ENCODE measurements at regions of chr12 and their contacts with region 1.

Region 1: DNA sequence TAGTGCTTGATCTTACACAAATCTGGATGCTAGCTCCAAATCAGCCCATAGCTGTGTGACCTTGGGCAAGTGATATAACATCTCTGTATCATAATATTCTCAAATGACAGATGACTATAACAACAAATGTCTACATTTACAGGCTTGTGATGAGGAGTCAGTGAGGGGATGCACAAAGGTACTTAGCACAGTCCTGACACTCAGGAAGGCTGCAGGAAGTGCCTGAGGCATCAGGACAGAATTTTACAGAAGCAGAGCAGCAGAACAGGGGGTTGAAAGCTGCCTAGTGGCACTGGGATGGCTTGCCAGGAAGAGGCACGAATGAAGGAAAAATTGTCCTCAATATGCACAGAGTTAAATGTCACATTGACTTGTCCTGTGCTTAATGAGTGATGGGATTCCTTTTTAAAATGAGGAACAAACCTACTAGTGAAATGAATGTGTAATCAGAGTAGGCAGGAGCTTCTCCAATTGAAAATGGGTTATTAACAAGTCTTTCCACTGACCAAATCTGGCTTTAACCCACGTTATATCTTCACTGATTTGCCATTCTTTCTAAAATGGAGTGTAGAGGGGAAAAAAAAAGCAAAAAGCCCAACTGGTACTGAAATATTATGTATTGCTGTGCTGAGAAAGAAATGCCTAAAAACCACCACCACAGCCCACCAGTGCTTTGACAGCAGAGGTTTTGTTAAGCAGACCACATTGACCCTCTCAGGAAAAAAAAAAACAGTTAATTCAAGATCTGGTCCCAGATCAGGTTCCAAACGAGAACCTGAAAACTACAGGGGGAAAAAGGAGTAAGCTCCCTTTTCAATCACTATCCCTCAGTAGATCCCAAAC is 11.6 kb downstream of the BTG1 start:
- DNase-seq: no peak
- ATAC-seq: no peak
- H3K4me3 ChIP-seq: no peak overlapping the region
- H3K27ac ChIP-seq: peak overlapping the region in 3 of 4 donors; percentile 2 to 37 (median 3)
- H3K4me1 ChIP-seq: peaks cover 66 to 74% of the 10 kb centered on the region in 2 donors
- H3K27me3 ChIP-seq: no peaks in the 10 kb centered on the region
- CTCF ChIP-seq: no peak
- POLR2A ChIP-seq: no peak

Region 2: DNA sequence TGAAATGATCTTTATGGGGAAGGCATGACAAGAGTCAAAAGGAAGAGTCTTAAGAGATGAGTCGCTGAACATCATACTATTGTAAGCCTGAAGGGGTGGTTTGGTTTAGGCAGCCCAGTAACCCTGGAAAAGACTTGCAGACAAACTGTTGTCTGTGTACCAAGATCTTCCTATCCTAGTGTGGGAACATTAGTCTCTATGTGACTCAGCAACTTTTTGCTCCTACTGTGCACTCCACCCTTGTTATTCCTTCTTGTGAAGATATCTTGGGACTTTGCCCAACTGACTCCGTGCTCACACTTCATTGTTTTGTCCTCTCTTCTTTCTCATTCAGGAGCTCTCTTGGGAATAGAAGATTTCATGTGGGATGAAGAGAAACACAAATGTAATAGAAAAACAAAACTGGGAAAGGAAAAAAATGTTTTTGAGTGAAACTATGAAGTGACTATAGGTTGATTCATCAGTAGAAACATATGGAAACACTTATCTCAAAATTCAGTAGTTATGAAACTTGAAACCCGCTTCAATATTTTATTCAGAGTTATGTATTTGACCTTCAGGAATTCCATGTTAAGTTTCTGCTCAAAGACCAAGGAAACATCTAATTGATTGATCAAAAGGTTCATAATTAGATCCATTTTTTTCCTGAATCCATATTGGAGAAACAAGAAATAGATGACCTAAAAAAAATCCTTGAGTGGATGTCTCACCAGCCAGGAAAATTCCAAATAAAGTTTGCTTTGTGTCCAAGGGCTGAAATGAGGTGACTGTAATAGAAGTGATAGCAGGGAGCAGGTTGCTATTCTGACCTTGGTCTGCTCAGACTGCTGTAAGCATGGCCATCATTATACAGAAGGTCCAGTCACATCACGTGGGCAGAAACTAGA is 55.6 kb before region 1 on chr12:
- in situ Hi-C with region 1: no loop called
- intact Hi-C with region 1: loop called (anchors 5 kb)
- DNase-seq: peak in 1 of 2 donors; percentile 50
- ATAC-seq: peak; percentile 72 to 80
- H3K4me3 ChIP-seq: no peak overlapping the region
- H3K27ac ChIP-seq: peak overlapping the region in 3 of 4 donors; percentile 4 to 59 (median 24)
- H3K4me1 ChIP-seq: peaks cover 4 to 18% of the 10 kb centered on the region in 2 donors
- H3K27me3 ChIP-seq: no peaks in the 10 kb centered on the region
- CTCF ChIP-seq: no peak
- POLR2A ChIP-seq: no peak

Measured in gastrocnemius medialis (tissue), 4 donors.